ENCODE measurements at regions of chr5 and their contacts with region 1.

Region 1: GRCh38 chr5:60959156-60959555 is 14.2 kb downstream of the NDUFAF2 start:
- DNase-seq: no peak
- ATAC-seq: no peak
- H3K4me3 ChIP-seq: no peak overlapping the region
- H3K27ac ChIP-seq: no peak overlapping the region
- H3K4me1 ChIP-seq: peaks cover 0 to 4% (median 0%) of the 10 kb centered on the region in 3 donors
- H3K27me3 ChIP-seq: no peaks in the 10 kb centered on the region
- CTCF ChIP-seq: no peak

Region 2: GRCh38 chr5:61232490-61233050 is 273.4 kb after region 1 on chr5:
- intact Hi-C with region 1: no loop called
- DNase-seq: no peak
- ATAC-seq: no peak
- H3K4me3 ChIP-seq: no peak overlapping the region
- H3K27ac ChIP-seq: no peak overlapping the region
- H3K4me1 ChIP-seq: peaks cover 18 to 26% (median 19%) of the 10 kb centered on the region in 3 donors
- H3K27me3 ChIP-seq: no peaks in the 10 kb centered on the region
- CTCF ChIP-seq: no peak

Region 3: GRCh38 chr5:61933787-61934626 is 974.9 kb after region 1 on chr5:
- intact Hi-C with region 1: loop called in 1 of 3 experiments (anchors 10 kb)
- DNase-seq: peak in 4 of 6 donors; percentile 60 to 88 (median 74)
- ATAC-seq: peak; percentile 99 to 100 (median 100)
- H3K4me3 ChIP-seq: no peak overlapping the region
- H3K27ac ChIP-seq: no peak overlapping the region
- H3K4me1 ChIP-seq: peaks cover 0 to 5% (median 0%) of the 10 kb centered on the region in 3 donors
- H3K27me3 ChIP-seq: no peaks in the 10 kb centered on the region
- CTCF ChIP-seq: peak; percentile 47 to 77 (median 69)